A549 (cell line): ENCODE measurements at regions of chrX and their contacts with region 1.

Region 1: GRCh38 chrX:53317365-53318069 is 36.1 kb upstream of the IQSEC2 start:
- DNase-seq: peak; percentile 48 to 70
- ATAC-seq: peak; percentile 75 to 88
- H3K4me3 ChIP-seq: no peak overlapping the region
- H3K27ac ChIP-seq: no peak overlapping the region
- H3K4me1 ChIP-seq: peaks cover 10% of the 10 kb centered on the region; the same call in 2 of the 3 replicates
- CTCF ChIP-seq: peak; percentile 69
- EP300 ChIP-seq: no peak
- POLR2A ChIP-seq: no peak
- RAD21 ChIP-seq: peak; percentile 71 to 73

Region 2: DNA sequence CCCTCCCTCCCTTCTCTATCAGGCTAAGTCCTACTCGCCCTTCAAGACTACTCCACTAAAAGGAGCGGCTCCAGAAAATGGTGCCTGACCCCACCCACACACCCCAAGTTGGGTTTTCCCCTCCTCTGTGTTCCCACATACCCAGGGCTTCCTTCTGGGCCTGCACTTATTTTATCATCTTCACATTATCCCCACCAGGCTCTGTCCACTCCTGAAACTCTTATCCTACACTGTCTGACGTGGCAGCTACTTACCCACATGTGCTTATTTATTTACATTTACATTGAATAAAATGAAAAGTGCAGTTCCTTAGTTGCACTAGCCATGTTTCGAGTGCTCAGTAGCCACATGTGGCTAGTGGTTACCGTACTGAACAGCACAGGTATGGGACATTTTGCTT is 87.4 kb before region 1 on chrX:
- CTCF ChIA-PET with region 1: no interaction called
- POLR2A ChIA-PET with region 1: no interaction called
- DNase-seq: no peak
- ATAC-seq: no peak
- H3K4me3 ChIP-seq: no peak overlapping the region
- H3K27ac ChIP-seq: no peak overlapping the region
- H3K4me1 ChIP-seq: no peaks in the 10 kb centered on the region
- CTCF ChIP-seq: no peak
- EP300 ChIP-seq: no peak
- POLR2A ChIP-seq: no peak
- RAD21 ChIP-seq: no peak

Region 3: GRCh38 chrX:53284684-53285447 is 32.7 kb before region 1 on chrX:
- CTCF ChIA-PET with region 1: interaction called, 170 read pairs
- POLR2A ChIA-PET with region 1: no interaction called
- DNase-seq: peak; percentile 48 to 60
- ATAC-seq: peak; percentile 32 to 62; a peak in 4 of 6 replicates
- H3K4me3 ChIP-seq: no peak overlapping the region
- H3K27ac ChIP-seq: peak overlapping the region; percentile 50 to 62; a peak in 5 of 6 replicates
- H3K4me1 ChIP-seq: peaks cover 45% of the 10 kb centered on the region
- CTCF ChIP-seq: peak; percentile 62
- EP300 ChIP-seq: no peak
- POLR2A ChIP-seq: no peak
- RAD21 ChIP-seq: peak; percentile 65 to 67

Region 4: GRCh38 chrX:53300157-53300556 is 17.4 kb before region 1 on chrX:
- CTCF ChIA-PET with region 1: interaction called, 37 read pairs
- POLR2A ChIA-PET with region 1: no interaction called
- DNase-seq: no peak
- ATAC-seq: no peak
- H3K4me3 ChIP-seq: no peak overlapping the region
- H3K27ac ChIP-seq: no peak overlapping the region
- H3K4me1 ChIP-seq: no peaks in the 10 kb centered on the region
- CTCF ChIP-seq: no peak
- EP300 ChIP-seq: no peak
- POLR2A ChIP-seq: no peak
- RAD21 ChIP-seq: no peak

Region 5: GRCh38 chrX:53330331-53330730 is 12.8 kb after region 1 on chrX:
- CTCF ChIA-PET with region 1: interaction called, 174 read pairs
- POLR2A ChIA-PET with region 1: interaction called, 3 read pairs
- DNase-seq: no peak
- ATAC-seq: no peak
- H3K4me3 ChIP-seq: no peak overlapping the region
- H3K27ac ChIP-seq: no peak overlapping the region
- H3K4me1 ChIP-seq: no peaks in the 10 kb centered on the region
- CTCF ChIP-seq: no peak
- EP300 ChIP-seq: no peak
- POLR2A ChIP-seq: no peak
- RAD21 ChIP-seq: no peak

Region 6: GRCh38 chrX:53422086-53422860 is 104.8 kb after region 1 on chrX and contains the start of gene SMC1A:
- CTCF ChIA-PET with region 1: interaction called, 16 read pairs
- POLR2A ChIA-PET with region 1: interaction called, 4 read pairs
- DNase-seq: peak; percentile 97 to 98
- ATAC-seq: peak; percentile 91 to 95
- H3K4me3 ChIP-seq: peak within 1 kb of the TSS; percentile 65
- H3K27ac ChIP-seq: peak within 1 kb of the TSS; percentile 87 to 94
- H3K4me1 ChIP-seq: peaks cover 13% of the 10 kb centered on the region; the same call in 1 of the 3 replicates
- CTCF ChIP-seq: no peak
- EP300 ChIP-seq: no peak
- POLR2A ChIP-seq: peak; percentile 71
- RAD21 ChIP-seq: no peak
- polyA plus RNA-seq, gene SMC1A: 85.4 and 100 TPM in 2 replicates

Region 7: GRCh38 chrX:53441531-53442321 is 124.2 kb after region 1 on chrX:
- CTCF ChIA-PET with region 1: interaction called, 50 read pairs
- POLR2A ChIA-PET with region 1: interaction called, 3 read pairs
- DNase-seq: peak; percentile 91
- ATAC-seq: peak; percentile 84 to 92
- H3K4me3 ChIP-seq: peak overlapping the region; percentile 46
- H3K27ac ChIP-seq: peak overlapping the region; percentile 90 to 95
- H3K4me1 ChIP-seq: peaks cover 11% of the 10 kb centered on the region
- CTCF ChIP-seq: no peak
- EP300 ChIP-seq: no peak
- POLR2A ChIP-seq: peak; percentile 73
- RAD21 ChIP-seq: no peak